ENCODE measurements at regions of chr2 and their contacts with region 1.

Region 1: GRCh38 chr2:205612636-205613035 is 69.7 kb upstream of the NRP2 start:
- DNase-seq: peak in 2 of 35 experiments; percentile 2 to 7
- ATAC-seq: peak; percentile 28 to 56 (median 50)
- H3K4me3 ChIP-seq: no peak overlapping the region
- H3K4me3 Mint-ChIP-seq: peak overlapping the region in 1 of 3 donors; percentile 7
- H3K27ac ChIP-seq: no peak overlapping the region
- H3K27ac Mint-ChIP-seq: no peak overlapping the region
- H3K4me1 ChIP-seq: peaks cover 7 to 11% of the 10 kb centered on the region in 2 experiments
- H3K4me1 Mint-ChIP-seq: peaks cover 16 to 18% (median 18%) of the 10 kb centered on the region in 3 donors
- H3K27me3 ChIP-seq: peaks cover 0 to 6% of the 10 kb centered on the region in 2 experiments
- H3K27me3 Mint-ChIP-seq: peaks cover 7 to 17% of the 10 kb centered on the region in 2 donors

Region 2: DNA sequence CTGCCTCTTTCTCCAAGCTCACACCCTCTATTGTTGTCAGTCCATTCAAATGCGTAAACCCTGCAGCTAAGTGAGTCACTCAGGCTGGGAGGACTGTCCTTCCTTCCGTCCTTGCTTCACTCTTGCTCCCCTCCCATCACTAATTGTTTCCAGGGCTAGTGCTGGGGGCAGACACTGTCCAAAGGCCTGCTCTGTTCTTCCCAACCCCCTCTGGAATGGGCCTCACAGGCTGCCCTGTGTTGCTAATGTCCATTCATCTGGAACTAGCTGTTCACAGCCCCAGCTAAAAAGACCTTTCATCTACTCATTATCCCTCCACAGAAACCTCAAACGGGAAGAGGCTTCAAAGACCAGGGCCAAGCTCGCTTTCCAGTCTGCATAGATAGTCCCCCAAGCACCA is 37.8 kb after region 1 on chr2:
- CTCF ChIA-PET with region 1: no interaction called
- POLR2A ChIA-PET with region 1: interaction called in 1 of 2 experiments, 24 read pairs
- DNase-seq: no peak
- ATAC-seq: no peak
- H3K4me3 ChIP-seq: no peak overlapping the region
- H3K4me3 Mint-ChIP-seq: no peak overlapping the region
- H3K27ac ChIP-seq: no peak overlapping the region
- H3K27ac Mint-ChIP-seq: no peak overlapping the region
- H3K4me1 ChIP-seq: no peaks in the 10 kb centered on the region
- H3K4me1 Mint-ChIP-seq: no peaks in the 10 kb centered on the region
- H3K27me3 ChIP-seq: peaks cover 0 to 5% of the 10 kb centered on the region in 2 experiments
- H3K27me3 Mint-ChIP-seq: peaks cover 0 to 3% of the 10 kb centered on the region in 2 donors